ENCODE measurements at regions of chr11 and their contacts with region 1.

Region 1: GRCh38 chr11:119121008-119121810 is at the start of gene HINFP:
- DNase-seq: peak; percentile 99
- ATAC-seq: peak; percentile 98
- H3K4me3 ChIP-seq: peak within 1 kb of the TSS; percentile 91 to 97 (median 95)
- H3K4me3 Mint-ChIP-seq: peak within 1 kb of the TSS; percentile 87
- H3K27ac ChIP-seq: peak within 1 kb of the TSS; percentile 72 to 90
- H3K27ac Mint-ChIP-seq: peak within 1 kb of the TSS; percentile 90
- H3K4me1 ChIP-seq: peaks cover 15 to 17% of the 10 kb centered on the region in 2 donors
- H3K4me1 Mint-ChIP-seq: peaks cover 26% of the 10 kb centered on the region
- H3K27me3 ChIP-seq: no peaks in the 10 kb centered on the region
- H3K27me3 Mint-ChIP-seq: no peaks in the 10 kb centered on the region
- CTCF ChIP-seq: no peak
- total RNA-seq, gene HINFP: 78.7 and 84.6 TPM in 2 replicates

Region 2: DNA sequence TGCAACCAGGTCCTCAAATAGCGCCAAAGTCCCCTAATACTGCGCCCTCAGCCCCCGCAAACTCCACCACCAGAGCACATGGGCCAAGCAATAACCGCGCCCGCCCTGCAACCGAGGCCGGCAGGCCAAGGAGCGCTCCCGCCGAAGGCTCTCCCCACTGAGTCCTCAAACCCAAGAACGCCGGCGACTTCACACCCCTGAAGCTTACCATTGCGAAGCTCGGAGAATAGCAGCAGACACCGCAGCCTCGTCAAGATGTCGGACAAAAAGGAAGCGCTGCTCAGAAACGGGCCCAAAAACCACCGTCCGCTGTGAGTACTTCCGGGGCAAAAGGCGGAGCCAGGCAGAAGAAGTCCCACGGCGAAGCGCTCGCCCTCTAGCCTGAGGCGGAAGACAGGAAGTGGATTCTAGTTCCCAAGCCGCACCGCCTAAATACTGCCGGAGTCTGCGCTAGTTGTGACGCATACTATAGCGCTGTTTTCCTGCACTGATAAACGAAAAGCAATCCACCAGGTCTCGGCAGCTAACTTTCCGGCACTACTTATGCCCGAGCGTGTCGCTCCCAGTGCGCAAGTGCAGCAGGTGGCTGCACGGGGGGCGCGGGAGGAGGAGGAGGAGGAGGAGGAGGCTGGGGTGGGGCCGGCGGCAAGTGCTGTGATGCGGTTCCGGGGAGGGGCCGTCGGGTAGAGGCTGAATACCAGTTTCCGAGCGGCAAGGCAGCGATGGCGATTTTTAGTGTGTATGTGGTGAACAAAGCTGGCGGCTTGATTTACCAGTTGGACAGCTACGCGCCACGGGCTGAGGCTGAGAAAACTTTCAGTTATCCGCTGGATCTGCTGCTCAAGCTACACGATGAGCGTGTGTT is 102.9 kb before region 1 on chr11 and contains the starts of genes RPS25 and TRAPPC4:
- CTCF ChIA-PET with region 1: no interaction called
- POLR2A ChIA-PET with region 1: no interaction called
- intact Hi-C with region 1: loop called (anchors 1 kb)
- DNase-seq: peak; percentile 98
- ATAC-seq: peak; percentile 91
- H3K4me3 ChIP-seq: peak within 1 kb of the TSS; percentile 85 to 98 (median 93)
- H3K4me3 Mint-ChIP-seq: peak within 1 kb of the TSS; percentile 100
- H3K27ac ChIP-seq: peak within 1 kb of the TSS; percentile 91 to 92
- H3K27ac Mint-ChIP-seq: peak within 1 kb of the TSS; percentile 100
- H3K4me1 ChIP-seq: peaks cover 27 to 34% of the 10 kb centered on the region in 2 donors
- H3K4me1 Mint-ChIP-seq: peaks cover 46% of the 10 kb centered on the region
- H3K27me3 ChIP-seq: no peaks in the 10 kb centered on the region
- H3K27me3 Mint-ChIP-seq: no peaks in the 10 kb centered on the region
- CTCF ChIP-seq: no peak
- total RNA-seq, gene RPS25: 1,713 and 1,823 TPM in 2 replicates
- total RNA-seq, gene TRAPPC4: 61.5 and 64.5 TPM in 2 replicates

Region 3: DNA sequence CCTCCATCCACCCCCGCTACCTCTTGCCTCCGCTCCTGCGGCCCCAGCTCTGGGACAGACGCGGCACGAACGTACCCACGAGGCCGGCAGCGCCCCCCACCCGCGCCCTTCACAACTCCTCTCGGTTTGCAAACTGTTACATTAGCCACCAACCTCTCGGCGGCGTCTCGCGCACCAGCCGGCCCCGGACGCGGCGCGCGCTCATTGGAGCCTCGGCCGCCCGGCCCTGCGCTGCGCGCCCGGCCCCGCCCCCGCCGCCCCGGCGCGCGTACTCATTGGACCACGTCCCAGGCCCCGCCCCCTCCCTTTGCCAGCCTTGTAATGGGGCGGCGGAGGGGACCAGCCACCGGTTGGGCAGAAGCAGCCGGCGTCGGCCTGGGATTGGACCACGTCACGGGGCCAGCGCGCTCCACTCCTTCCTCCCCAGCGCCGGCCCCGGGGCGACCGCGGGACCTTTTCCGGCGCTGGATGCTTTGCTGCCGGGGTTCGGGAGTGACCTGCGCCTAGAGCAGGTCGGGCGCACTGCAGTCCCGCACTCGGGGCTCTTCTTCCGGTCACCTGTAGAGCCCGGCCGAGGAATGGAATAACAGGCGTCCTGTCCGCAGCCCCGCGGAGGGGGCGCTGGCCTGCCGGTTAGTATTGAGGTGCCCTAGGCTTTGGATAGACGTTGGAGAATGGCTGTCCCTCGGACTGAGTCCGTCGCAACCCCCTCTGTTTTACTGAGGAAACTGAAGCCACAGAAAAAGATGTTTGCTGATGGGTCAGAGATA is 64.0 kb before region 1 on chr11 and contains the start of gene HYOU1:
- CTCF ChIA-PET with region 1: no interaction called
- POLR2A ChIA-PET with region 1: no interaction called
- intact Hi-C with region 1: loop called (anchors 1 kb)
- DNase-seq: peak; percentile 99
- ATAC-seq: peak; percentile 95
- H3K4me3 ChIP-seq: peak within 1 kb of the TSS; percentile 36 to 95 (median 90)
- H3K4me3 Mint-ChIP-seq: peak within 1 kb of the TSS; percentile 97
- H3K27ac ChIP-seq: peak within 1 kb of the TSS; percentile 75 to 93
- H3K27ac Mint-ChIP-seq: peak within 1 kb of the TSS; percentile 93
- H3K4me1 ChIP-seq: peaks cover 18 to 29% of the 10 kb centered on the region in 2 donors
- H3K4me1 Mint-ChIP-seq: peaks cover 36% of the 10 kb centered on the region
- H3K27me3 ChIP-seq: no peaks in the 10 kb centered on the region
- H3K27me3 Mint-ChIP-seq: no peaks in the 10 kb centered on the region
- CTCF ChIP-seq: peak; percentile 6
- total RNA-seq, gene HYOU1: 46.2 and 48.7 TPM in 2 replicates

Region 4: DNA sequence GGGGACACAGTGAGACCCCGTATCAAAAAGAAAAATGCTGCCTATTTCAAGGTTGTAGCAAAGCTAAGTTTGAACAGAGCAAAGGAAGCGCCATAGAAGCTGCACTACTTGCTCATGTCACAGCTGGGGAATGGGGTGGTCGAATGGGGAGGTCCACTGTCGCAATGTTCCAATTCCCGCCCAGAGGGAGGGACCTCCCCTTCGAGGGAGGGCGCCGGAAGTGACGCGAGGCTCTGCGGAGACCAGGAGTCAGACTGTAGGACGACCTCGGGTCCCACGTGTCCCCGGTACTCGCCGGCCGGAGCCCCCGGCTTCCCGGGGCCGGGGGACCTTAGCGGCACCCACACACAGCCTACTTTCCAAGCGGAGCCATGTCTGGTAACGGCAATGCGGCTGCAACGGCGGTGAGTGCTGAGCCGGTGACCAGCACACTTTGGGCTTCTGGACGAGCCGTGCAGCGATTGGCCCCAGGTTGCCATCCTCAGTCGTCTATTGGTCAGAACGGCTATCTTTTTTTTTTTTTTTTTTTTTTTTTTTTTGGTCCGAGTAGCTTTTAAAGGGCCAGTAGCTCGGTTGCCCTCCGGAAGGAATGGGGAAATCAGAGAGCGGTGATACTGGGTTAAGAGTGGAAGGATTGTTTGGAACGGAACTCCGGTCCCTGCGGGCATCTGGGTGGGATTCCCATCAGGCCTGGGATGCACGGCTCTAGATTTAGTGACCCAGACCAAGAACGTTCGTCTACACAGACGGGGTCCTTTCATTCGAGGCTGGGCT is 36.4 kb before region 1 on chr11 and contains the start of gene HMBS:
- CTCF ChIA-PET with region 1: no interaction called
- POLR2A ChIA-PET with region 1: interaction called, 9 read pairs
- intact Hi-C with region 1: loop called (anchors 1 kb)
- DNase-seq: peak; percentile 97
- ATAC-seq: peak; percentile 91
- H3K4me3 ChIP-seq: peak within 1 kb of the TSS; percentile 74 to 90 (median 81)
- H3K4me3 Mint-ChIP-seq: peak within 1 kb of the TSS; percentile 98
- H3K27ac ChIP-seq: peak within 1 kb of the TSS; percentile 45 to 79
- H3K27ac Mint-ChIP-seq: peak within 1 kb of the TSS; percentile 95
- H3K4me1 ChIP-seq: peaks cover 12 to 21% of the 10 kb centered on the region in 2 donors
- H3K4me1 Mint-ChIP-seq: peaks cover 20% of the 10 kb centered on the region
- H3K27me3 ChIP-seq: no peaks in the 10 kb centered on the region
- H3K27me3 Mint-ChIP-seq: no peaks in the 10 kb centered on the region
- CTCF ChIP-seq: no peak
- total RNA-seq, gene HMBS: 7.6 and 9.2 TPM in 2 replicates

Region 5: GRCh38 chr11:119205574-119206510 is 84.6 kb after region 1 on chr11 and contains the start of gene CBL:
- CTCF ChIA-PET with region 1: interaction called, 8 read pairs
- POLR2A ChIA-PET with region 1: interaction called, 3 read pairs
- intact Hi-C with region 1: loop called (anchors 1 kb)
- DNase-seq: peak; percentile 96
- ATAC-seq: peak; percentile 88
- H3K4me3 ChIP-seq: peak within 1 kb of the TSS; percentile 93 to 98 (median 96)
- H3K4me3 Mint-ChIP-seq: peak within 1 kb of the TSS; percentile 97
- H3K27ac ChIP-seq: peak within 1 kb of the TSS; percentile 60 to 84
- H3K27ac Mint-ChIP-seq: peak within 1 kb of the TSS; percentile 94
- H3K4me1 ChIP-seq: peaks cover 18 to 20% of the 10 kb centered on the region in 2 donors
- H3K4me1 Mint-ChIP-seq: peaks cover 33% of the 10 kb centered on the region
- H3K27me3 ChIP-seq: no peaks in the 10 kb centered on the region
- H3K27me3 Mint-ChIP-seq: no peaks in the 10 kb centered on the region
- CTCF ChIP-seq: peak; percentile 78
- total RNA-seq, gene CBL: 35.2 and 38.7 TPM in 2 replicates